ENCODE measurements at regions of chr10 and their contacts with region 1.

Region 1: GRCh38 chr10:96292971-96293920 is 11.0 kb upstream of the DNTT start:
- DNase-seq: peak in 1 of 2 experiments; percentile 45
- H3K4me3 ChIP-seq: no peak overlapping the region
- H3K4me3 Mint-ChIP-seq: no peak overlapping the region
- H3K27ac Mint-ChIP-seq: no peak overlapping the region
- H3K4me1 ChIP-seq: peaks cover 4% of the 10 kb centered on the region
- H3K4me1 Mint-ChIP-seq: peaks cover 7% of the 10 kb centered on the region
- H3K27me3 ChIP-seq: no peaks in the 10 kb centered on the region
- H3K27me3 Mint-ChIP-seq: peaks cover 8% of the 10 kb centered on the region
- CTCF ChIP-seq: peak; percentile 56 to 60

Region 2: DNA sequence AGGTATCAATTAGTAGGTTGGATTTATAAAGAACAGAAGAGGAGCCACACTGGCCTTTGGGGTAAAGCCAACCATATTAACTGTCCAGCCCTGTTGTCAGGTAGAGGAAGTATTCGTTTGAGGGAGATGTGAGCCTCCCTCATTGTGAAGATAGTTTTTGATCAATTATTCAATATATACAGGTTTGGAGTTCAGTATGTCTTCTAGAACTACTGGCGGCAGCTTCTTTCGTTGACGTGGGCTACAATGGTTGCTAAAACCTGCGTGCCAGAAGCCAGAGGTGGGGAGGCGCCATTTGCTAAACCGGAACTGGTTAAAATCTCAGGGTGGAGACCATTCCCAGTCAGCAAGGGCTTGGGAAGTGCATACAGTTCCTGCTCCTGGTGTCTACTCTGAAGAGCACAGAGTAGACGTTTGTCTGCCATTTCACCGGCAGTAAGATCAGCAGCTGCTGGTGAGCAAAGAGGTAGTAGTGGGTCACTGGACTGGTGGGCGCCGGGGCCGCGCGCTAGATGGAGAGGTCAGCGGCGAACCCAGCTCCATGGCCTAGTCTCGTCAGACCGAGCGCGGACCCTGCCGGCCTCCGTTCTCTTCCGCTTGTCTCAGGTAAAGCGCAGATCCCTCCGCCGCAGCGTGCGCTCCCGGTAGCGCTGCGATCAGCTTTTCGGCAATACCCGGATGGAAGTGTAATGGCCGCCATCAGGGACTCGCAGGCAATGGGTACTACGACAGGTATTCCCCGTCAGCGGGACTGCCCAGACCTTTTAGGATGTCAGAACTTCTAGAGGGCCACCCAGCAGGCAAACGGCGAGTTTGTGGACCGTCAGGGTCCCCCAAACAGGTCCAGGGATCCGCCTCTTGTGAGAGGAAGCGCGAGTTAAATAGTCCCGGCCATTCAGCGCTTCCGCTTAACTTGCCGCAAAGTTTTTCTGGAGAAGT is 163.6 kb before region 1 on chr10 and contains the start of gene ZNF518A:
- CTCF ChIA-PET with region 1: no interaction called
- POLR2A ChIA-PET with region 1: interaction called, 3 read pairs
- intact Hi-C with region 1: loop called (anchors 5 kb)
- DNase-seq: peak; percentile 95 to 97
- H3K4me3 ChIP-seq: peak within 1 kb of the TSS; percentile 75
- H3K4me3 Mint-ChIP-seq: peak within 1 kb of the TSS; percentile 93
- H3K27ac Mint-ChIP-seq: peak within 1 kb of the TSS; percentile 96
- H3K4me1 ChIP-seq: peaks cover 17% of the 10 kb centered on the region
- H3K4me1 Mint-ChIP-seq: peaks cover 12% of the 10 kb centered on the region
- H3K27me3 ChIP-seq: no peaks in the 10 kb centered on the region
- H3K27me3 Mint-ChIP-seq: no peaks in the 10 kb centered on the region
- CTCF ChIP-seq: no peak
- total RNA-seq, gene ZNF518A: 47.2 TPM in 2 replicates

Region 3: DNA sequence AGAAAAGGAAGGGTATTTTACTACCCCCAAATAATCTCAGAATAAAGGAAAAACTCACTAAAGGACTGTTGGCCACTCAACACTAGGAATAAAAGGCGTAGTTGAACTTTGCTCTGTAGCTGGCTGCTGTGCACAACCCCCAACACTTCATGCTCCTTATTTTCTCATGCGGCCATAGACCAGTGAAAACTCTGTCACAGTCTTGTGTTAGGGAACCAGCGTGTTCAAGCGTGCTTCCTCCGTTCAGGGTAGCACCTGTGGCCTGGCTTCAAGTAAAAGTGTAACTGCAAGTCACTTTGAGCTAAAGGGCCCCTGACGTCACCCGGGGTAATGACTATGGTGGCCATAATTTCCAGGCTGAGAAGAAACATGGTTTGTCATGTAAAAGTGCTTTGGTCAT is 48.9 kb before region 1 on chr10:
- CTCF ChIA-PET with region 1: no interaction called
- POLR2A ChIA-PET with region 1: no interaction called
- intact Hi-C with region 1: no loop called
- DNase-seq: no peak
- H3K4me3 ChIP-seq: no peak overlapping the region
- H3K4me3 Mint-ChIP-seq: no peak overlapping the region
- H3K27ac Mint-ChIP-seq: no peak overlapping the region
- H3K4me1 ChIP-seq: peaks cover 16% of the 10 kb centered on the region; the same call in 1 of the 2 replicates
- H3K4me1 Mint-ChIP-seq: no peaks in the 10 kb centered on the region
- H3K27me3 ChIP-seq: no peaks in the 10 kb centered on the region
- H3K27me3 Mint-ChIP-seq: no peaks in the 10 kb centered on the region
- CTCF ChIP-seq: no peak